Activated CD4-positive, alpha-beta memory T cell treated with anti-CD3 and anti-CD28 coated beads for 36 hours (primary cell): ENCODE measurements at regions of chr10 and their contacts with region 1.

Region 1: DNA sequence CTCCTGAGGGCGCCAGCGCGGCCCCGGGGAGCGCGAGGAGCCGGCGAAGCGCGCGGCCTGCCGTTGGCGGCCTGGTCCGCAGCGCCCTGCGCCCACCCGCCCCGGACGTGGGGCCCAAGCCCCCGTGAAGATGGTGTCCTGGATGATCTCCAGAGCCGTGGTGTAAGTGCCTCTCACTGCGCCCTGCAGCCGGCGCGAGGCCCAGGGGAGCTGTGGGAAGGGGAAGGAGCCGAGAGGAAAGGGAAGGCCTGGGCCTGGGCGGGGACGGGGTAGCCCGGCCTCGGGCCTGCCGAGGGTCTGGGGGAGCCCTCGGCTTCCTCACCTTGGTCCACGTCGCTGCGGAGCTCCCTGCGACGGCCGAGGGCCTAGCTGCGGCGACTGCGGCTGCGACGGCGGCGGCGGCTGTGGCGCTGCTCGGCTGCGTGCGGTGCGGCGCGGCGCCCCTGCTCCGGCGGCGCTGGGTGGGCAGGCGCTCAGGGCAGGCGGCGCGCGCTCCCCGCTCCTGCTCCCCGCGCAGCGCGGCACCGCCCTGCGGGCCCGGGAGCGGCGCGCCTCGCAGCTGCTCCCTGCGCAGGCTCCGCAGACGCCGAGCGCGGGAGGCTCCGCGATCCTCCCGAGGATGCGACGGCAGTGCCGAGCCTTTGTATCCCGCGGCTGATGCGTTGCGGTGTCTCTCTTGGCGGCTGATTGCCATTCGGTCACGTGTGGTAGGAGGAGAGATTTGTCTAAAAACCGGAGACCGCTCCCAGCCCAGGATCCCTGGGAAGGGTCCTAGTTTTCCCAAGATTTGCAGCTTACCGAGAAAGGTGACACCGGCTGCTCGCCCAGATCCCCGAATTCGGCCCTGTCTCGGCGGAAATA is 445 bp downstream of the REEP3 start:
- DNase-seq: peak; percentile 64
- H3K4me3 Mint-ChIP-seq: peak overlapping the region; percentile 87
- H3K27ac Mint-ChIP-seq: peak overlapping the region; percentile 92
- H3K4me1 Mint-ChIP-seq: peaks cover 63% of the 10 kb centered on the region
- H3K27me3 Mint-ChIP-seq: no peaks in the 10 kb centered on the region

Region 2: GRCh38 chr10:62779487-62780248 is 742.0 kb before region 1 on chr10:
- CTCF ChIA-PET with region 1: no interaction called
- POLR2A ChIA-PET with region 1: no interaction called
- intact Hi-C with region 1: no loop called
- DNase-seq: peak; percentile 89
- H3K4me3 Mint-ChIP-seq: no peak overlapping the region
- H3K27ac Mint-ChIP-seq: no peak overlapping the region
- H3K4me1 Mint-ChIP-seq: peaks cover 22% of the 10 kb centered on the region
- H3K27me3 Mint-ChIP-seq: peaks cover 1% of the 10 kb centered on the region

Region 3: GRCh38 chr10:63173468-63174232 is 348.0 kb before region 1 on chr10:
- CTCF ChIA-PET with region 1: no interaction called
- POLR2A ChIA-PET with region 1: no interaction called
- intact Hi-C with region 1: loop called (anchors 5 kb)
- DNase-seq: no peak
- H3K4me3 Mint-ChIP-seq: no peak overlapping the region
- H3K27ac Mint-ChIP-seq: peak overlapping the region; percentile 65
- H3K4me1 Mint-ChIP-seq: peaks cover 52% of the 10 kb centered on the region
- H3K27me3 Mint-ChIP-seq: no peaks in the 10 kb centered on the region

Region 4: GRCh38 chr10:63465293-63466143 is 56.1 kb before region 1 on chr10 and contains the start of gene JMJD1C:
- CTCF ChIA-PET with region 1: no interaction called
- POLR2A ChIA-PET with region 1: interaction called, 4 read pairs
- intact Hi-C with region 1: loop called (anchors 1 kb)
- DNase-seq: peak; percentile 69
- H3K4me3 Mint-ChIP-seq: peak within 1 kb of the TSS; percentile 91
- H3K27ac Mint-ChIP-seq: peak within 1 kb of the TSS; percentile 58
- H3K4me1 Mint-ChIP-seq: peaks cover 18% of the 10 kb centered on the region
- H3K27me3 Mint-ChIP-seq: no peaks in the 10 kb centered on the region
- total RNA-seq, gene JMJD1C: 42.6 to 47.3 TPM

Region 5: DNA sequence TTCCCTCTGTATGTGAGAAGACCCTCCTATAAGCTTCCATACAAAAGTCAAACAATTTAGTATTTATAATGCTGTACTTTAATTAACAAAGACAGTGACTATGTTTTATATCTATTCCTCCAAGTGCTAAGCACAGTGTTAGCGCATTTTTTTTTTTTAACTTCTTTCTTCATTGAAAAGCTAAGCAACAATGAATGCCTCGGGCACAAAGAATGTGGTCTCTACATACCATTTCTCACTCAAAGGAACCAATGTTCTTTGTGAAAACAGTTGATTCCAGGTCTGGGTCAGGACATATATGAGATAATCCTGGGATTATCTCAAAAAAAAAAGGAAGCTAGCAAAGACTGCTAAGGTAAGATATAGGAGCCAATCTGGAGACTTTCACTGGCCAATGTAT is 26.7 kb before region 1 on chr10:
- CTCF ChIA-PET with region 1: no interaction called
- POLR2A ChIA-PET with region 1: no interaction called
- intact Hi-C with region 1: no loop called
- DNase-seq: no peak
- H3K4me3 Mint-ChIP-seq: no peak overlapping the region
- H3K27ac Mint-ChIP-seq: no peak overlapping the region
- H3K4me1 Mint-ChIP-seq: peaks cover 14% of the 10 kb centered on the region
- H3K27me3 Mint-ChIP-seq: no peaks in the 10 kb centered on the region

Region 6: GRCh38 chr10:63542835-63543575 is 21.4 kb after region 1 on chr10:
- CTCF ChIA-PET with region 1: no interaction called
- POLR2A ChIA-PET with region 1: no interaction called
- intact Hi-C with region 1: no loop called
- DNase-seq: no peak
- H3K4me3 Mint-ChIP-seq: no peak overlapping the region
- H3K27ac Mint-ChIP-seq: no peak overlapping the region
- H3K4me1 Mint-ChIP-seq: peaks cover 15% of the 10 kb centered on the region
- H3K27me3 Mint-ChIP-seq: no peaks in the 10 kb centered on the region

Region 7: DNA sequence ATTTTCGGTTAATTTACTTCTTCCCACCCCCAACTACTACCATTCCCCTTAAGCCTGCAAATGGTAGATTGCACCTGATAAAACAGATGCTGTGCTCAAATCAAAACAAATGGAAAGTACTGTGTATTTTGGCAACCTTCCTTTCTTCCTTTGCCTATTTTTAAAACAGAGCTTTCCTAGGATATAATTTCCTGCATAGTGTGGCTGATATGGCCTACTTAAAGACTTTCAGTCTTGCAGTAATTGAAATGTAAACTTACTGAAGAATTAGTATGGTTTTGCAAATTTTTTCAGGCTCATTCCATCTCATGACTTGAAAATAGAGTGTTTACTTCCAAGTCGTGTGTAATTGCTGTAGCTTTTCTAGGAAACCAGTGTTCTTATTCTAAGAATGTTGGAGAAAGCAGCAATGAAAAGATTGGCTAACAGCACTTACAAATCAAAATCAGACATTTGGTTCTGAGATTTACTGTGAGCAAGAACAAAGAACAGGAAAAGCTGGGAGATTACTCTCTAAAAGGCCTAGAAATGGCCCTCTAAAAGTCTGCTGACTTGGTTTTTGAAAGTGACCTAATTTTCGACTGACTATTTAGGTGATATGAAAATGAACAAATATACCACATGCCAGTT is 51.5 kb after region 1 on chr10:
- CTCF ChIA-PET with region 1: no interaction called
- POLR2A ChIA-PET with region 1: interaction called, 4 read pairs
- intact Hi-C with region 1: loop called (anchors 5 kb)
- DNase-seq: no peak
- H3K4me3 Mint-ChIP-seq: no peak overlapping the region
- H3K27ac Mint-ChIP-seq: peak overlapping the region; percentile 40
- H3K4me1 Mint-ChIP-seq: peaks cover 28% of the 10 kb centered on the region
- H3K27me3 Mint-ChIP-seq: no peaks in the 10 kb centered on the region

Region 8: GRCh38 chr10:63614371-63614891 is 92.8 kb after region 1 on chr10:
- CTCF ChIA-PET with region 1: no interaction called
- POLR2A ChIA-PET with region 1: no interaction called
- intact Hi-C with region 1: loop called (anchors 5 kb)
- DNase-seq: no peak
- H3K4me3 Mint-ChIP-seq: no peak overlapping the region
- H3K27ac Mint-ChIP-seq: no peak overlapping the region
- H3K4me1 Mint-ChIP-seq: peaks cover 6% of the 10 kb centered on the region
- H3K27me3 Mint-ChIP-seq: no peaks in the 10 kb centered on the region

Region 9: DNA sequence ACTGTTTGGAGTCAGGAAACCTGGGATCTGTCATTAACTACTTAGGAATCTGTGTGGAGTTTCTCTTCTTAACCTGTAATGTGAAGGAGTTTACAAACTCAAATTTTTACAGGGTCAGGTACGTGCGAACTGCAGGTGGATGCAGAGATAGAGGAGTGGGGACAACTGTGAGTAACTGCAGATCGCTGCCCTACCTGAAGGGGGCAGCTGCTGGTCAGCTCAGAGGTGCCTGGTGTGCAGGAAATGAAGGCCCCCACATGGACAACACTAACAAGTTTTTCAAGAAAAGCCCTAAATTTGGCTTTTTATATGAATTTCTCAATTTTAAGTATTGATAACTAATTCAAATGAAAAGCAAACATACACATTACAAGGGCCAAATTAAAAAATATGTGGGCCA is 379.6 kb after region 1 on chr10:
- CTCF ChIA-PET with region 1: no interaction called
- POLR2A ChIA-PET with region 1: no interaction called
- intact Hi-C with region 1: no loop called
- DNase-seq: no peak
- H3K4me3 Mint-ChIP-seq: no peak overlapping the region
- H3K27ac Mint-ChIP-seq: no peak overlapping the region
- H3K4me1 Mint-ChIP-seq: no peaks in the 10 kb centered on the region
- H3K27me3 Mint-ChIP-seq: peaks cover 4% of the 10 kb centered on the region